ENCODE measurements at regions of chr16 and their contacts with region 1.

Region 1: GRCh38 chr16:55828680-55829079 is 4.2 kb downstream of the CES1 start:
- DNase-seq: no peak
- ATAC-seq: no peak
- H3K4me3 ChIP-seq: no peak overlapping the region
- H3K4me3 Mint-ChIP-seq: no peak overlapping the region
- H3K27ac ChIP-seq: no peak overlapping the region
- H3K27ac Mint-ChIP-seq: no peak overlapping the region
- H3K4me1 ChIP-seq: no peaks in the 10 kb centered on the region
- H3K4me1 Mint-ChIP-seq: no peaks in the 10 kb centered on the region
- H3K27me3 ChIP-seq: peaks cover 3 to 7% of the 10 kb centered on the region in 2 experiments
- H3K27me3 Mint-ChIP-seq: peaks cover 12% of the 10 kb centered on the region
- CTCF ChIP-seq: no peak

Region 2: GRCh38 chr16:55765161-55765560 is 63.5 kb before region 1 on chr16:
- CTCF ChIA-PET with region 1: no interaction called
- POLR2A ChIA-PET with region 1: no interaction called
- intact Hi-C with region 1: loop called in 1 of 2 experiments (anchors 2 kb)
- DNase-seq: no peak
- ATAC-seq: no peak
- H3K4me3 ChIP-seq: no peak overlapping the region
- H3K4me3 Mint-ChIP-seq: no peak overlapping the region
- H3K27ac ChIP-seq: no peak overlapping the region
- H3K27ac Mint-ChIP-seq: no peak overlapping the region
- H3K4me1 ChIP-seq: no peaks in the 10 kb centered on the region
- H3K4me1 Mint-ChIP-seq: no peaks in the 10 kb centered on the region
- H3K27me3 ChIP-seq: no peaks in the 10 kb centered on the region
- H3K27me3 Mint-ChIP-seq: peaks cover 24% of the 10 kb centered on the region
- CTCF ChIP-seq: no peak

Region 3: GRCh38 chr16:56311208-56312027 is 482.7 kb after region 1 on chr16:
- CTCF ChIA-PET with region 1: no interaction called
- POLR2A ChIA-PET with region 1: no interaction called
- intact Hi-C with region 1: no loop called
- DNase-seq: no peak
- ATAC-seq: no peak
- H3K4me3 ChIP-seq: no peak overlapping the region
- H3K4me3 Mint-ChIP-seq: no peak overlapping the region
- H3K27ac ChIP-seq: no peak overlapping the region
- H3K27ac Mint-ChIP-seq: no peak overlapping the region
- H3K4me1 ChIP-seq: no peaks in the 10 kb centered on the region
- H3K4me1 Mint-ChIP-seq: no peaks in the 10 kb centered on the region
- H3K27me3 ChIP-seq: no peaks in the 10 kb centered on the region
- H3K27me3 Mint-ChIP-seq: no peaks in the 10 kb centered on the region
- CTCF ChIP-seq: no peak

Measured in CD4-positive, alpha-beta T cell (primary cell).